ENCODE measurements at regions of chr22 and their contacts with region 1.

Region 1: GRCh38 chr22:34829485-34829884 is 236.5 kb upstream of the ISX start:
- DNase-seq: no peak
- ATAC-seq: no peak
- H3K4me3 ChIP-seq: no peak overlapping the region
- H3K27ac ChIP-seq: no peak overlapping the region
- H3K4me1 ChIP-seq: no peaks in the 10 kb centered on the region
- H3K27me3 ChIP-seq: no peaks in the 10 kb centered on the region
- CTCF ChIP-seq: no peak

Region 2: GRCh38 chr22:33678523-33678922 is 1151.0 kb before region 1 on chr22:
- CTCF ChIA-PET with region 1: no interaction called
- POLR2A ChIA-PET with region 1: no interaction called
- in situ Hi-C with region 1: no loop called
- intact Hi-C with region 1: loop called (anchors 10 kb)
- DNase-seq: no peak
- ATAC-seq: no peak
- H3K4me3 ChIP-seq: no peak overlapping the region
- H3K27ac ChIP-seq: no peak overlapping the region
- H3K4me1 ChIP-seq: no peaks in the 10 kb centered on the region
- H3K27me3 ChIP-seq: no peaks in the 10 kb centered on the region
- CTCF ChIP-seq: no peak

Region 3: DNA sequence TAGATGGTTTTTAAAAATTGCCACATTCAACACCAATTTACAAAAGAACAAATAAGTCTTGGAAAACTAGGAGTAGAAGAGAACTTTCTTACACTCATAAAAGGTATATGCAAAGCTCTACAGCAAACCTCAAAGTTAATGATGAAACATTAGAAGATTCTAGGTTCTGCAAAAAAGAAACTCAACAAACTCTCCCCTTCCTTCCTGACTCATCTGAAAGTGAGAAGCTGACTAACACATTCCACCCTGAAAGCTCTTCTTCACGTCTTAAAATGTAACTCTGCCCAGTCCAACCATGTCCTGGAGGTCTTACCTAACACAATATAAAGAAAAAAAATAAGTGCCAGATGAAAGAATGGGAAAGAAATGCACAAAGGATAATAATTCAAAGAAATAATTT is 17.6 kb after region 1 on chr22:
- CTCF ChIA-PET with region 1: no interaction called
- POLR2A ChIA-PET with region 1: no interaction called
- in situ Hi-C with region 1: no loop called
- intact Hi-C with region 1: no loop called
- DNase-seq: no peak
- ATAC-seq: no peak
- H3K4me3 ChIP-seq: no peak overlapping the region
- H3K27ac ChIP-seq: no peak overlapping the region
- H3K4me1 ChIP-seq: no peaks in the 10 kb centered on the region
- H3K27me3 ChIP-seq: no peaks in the 10 kb centered on the region
- CTCF ChIP-seq: no peak

Region 4: DNA sequence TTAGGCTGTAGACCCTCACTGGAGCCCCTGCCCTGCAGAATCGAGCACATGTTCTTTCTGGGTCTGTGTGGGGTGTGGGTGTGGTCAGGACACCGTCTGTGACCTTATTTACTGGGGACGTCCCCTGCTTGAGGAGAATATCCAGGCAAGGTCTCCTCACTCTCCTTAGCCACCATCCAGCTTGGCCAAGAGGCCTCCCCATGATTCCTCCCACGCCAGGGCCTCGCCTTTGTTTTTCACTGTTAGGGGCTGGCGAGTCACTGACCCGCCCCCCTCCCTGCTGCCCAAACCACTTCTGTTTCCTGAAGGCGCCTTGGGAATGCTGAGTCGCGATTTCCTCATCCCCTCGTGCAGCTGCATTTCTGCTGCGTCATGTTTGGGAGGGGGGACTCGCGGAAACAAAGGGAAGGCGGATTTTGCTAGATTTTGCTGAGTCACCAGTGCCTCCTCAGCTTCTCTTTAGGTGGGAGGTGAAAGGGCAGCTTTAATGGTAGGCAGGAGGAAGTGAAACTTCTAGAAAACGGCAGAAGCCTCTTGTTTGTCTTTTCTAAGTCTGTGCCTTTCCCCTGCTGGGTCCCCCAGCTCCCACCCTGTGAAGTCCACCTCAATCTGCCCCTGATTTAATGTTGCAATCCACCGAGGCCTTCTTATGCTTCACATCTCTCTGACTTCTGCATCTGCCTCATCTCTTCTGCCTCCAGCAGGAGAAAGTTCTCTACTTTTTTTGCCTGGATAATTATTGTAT is 547.4 kb after region 1 on chr22:
- CTCF ChIA-PET with region 1: no interaction called
- POLR2A ChIA-PET with region 1: no interaction called
- in situ Hi-C with region 1: no loop called
- intact Hi-C with region 1: no loop called
- DNase-seq: peak; percentile 75
- ATAC-seq: no peak
- H3K4me3 ChIP-seq: no peak overlapping the region
- H3K27ac ChIP-seq: peak overlapping the region; percentile 95
- H3K4me1 ChIP-seq: peaks cover 45% of the 10 kb centered on the region
- H3K27me3 ChIP-seq: no peaks in the 10 kb centered on the region
- CTCF ChIP-seq: no peak

Measured in Panc1 (cell line).